Activated CD4-positive, alpha-beta memory T cell treated with anti-CD3 and anti-CD28 coated beads for 36 hours (primary cell): ENCODE measurements at regions of chr18 and their contacts with region 1.

Region 1: GRCh38 chr18:50287441-50288347 is at the start of gene CXXC1:
- DNase-seq: peak; percentile 98
- H3K4me3 Mint-ChIP-seq: peak within 1 kb of the TSS; percentile 88
- H3K27ac Mint-ChIP-seq: peak within 1 kb of the TSS; percentile 100
- H3K4me1 Mint-ChIP-seq: peaks cover 28% of the 10 kb centered on the region
- H3K27me3 Mint-ChIP-seq: no peaks in the 10 kb centered on the region
- total RNA-seq, gene CXXC1: 80.8 to 80.9 TPM

Region 2: DNA sequence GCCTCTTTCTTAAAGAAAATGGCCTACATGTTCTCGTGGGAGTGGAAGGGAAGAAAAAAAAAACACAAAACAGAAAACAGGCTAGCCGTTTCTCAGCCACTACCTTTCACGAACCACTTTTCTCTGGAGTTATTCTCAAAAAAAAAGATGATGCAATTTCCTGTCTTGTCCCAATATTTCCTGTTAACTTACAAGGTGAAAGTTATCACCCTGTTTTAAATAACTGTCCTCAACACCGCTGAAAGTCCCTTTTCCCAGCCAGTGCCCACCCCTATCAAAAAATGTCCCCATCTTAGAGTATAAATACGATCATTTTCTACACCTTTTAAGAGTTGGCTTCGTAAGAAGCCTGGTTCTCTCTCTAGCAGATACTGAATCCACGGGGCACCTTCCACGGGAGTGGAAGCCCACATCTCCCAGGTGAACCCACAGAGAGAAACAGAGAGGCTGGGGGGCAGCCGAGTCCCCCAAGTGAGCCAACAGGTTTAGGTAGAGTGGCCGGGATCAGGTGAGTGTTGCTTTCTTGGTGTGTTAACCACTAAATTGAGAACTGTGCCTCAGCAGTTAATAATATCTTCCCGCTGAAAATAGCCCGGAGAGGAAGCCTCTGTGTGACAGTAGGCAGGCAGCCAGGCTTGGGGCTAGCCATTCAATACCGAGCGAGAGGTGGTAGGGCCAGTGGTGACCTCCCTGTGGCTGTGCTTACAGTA is 1352.8 kb before region 1 on chr18:
- CTCF ChIA-PET with region 1: no interaction called
- POLR2A ChIA-PET with region 1: no interaction called
- intact Hi-C with region 1: loop called (anchors 10 kb)
- DNase-seq: no peak
- H3K4me3 Mint-ChIP-seq: peak overlapping the region; percentile 40
- H3K27ac Mint-ChIP-seq: peak overlapping the region; percentile 76
- H3K4me1 Mint-ChIP-seq: peaks cover 89% of the 10 kb centered on the region
- H3K27me3 Mint-ChIP-seq: no peaks in the 10 kb centered on the region

Region 3: DNA sequence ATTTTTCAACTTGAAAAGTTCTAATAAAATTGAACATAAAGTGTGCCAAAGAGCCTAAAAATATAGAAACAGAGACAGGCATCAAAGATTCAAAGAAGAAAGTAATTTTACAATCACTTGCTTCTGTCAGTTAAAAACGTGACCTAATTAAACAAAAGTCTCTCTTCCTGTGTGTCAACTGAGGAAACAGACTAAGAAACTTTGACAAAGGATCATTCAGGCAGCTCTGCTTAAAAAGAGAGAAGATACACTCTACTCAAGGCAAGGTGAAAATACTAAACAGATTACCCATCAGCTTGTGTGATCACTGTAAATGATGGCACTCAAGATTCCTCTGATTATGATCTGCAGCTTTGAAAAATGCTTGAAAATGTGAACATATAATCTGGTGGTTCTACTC is 875.0 kb before region 1 on chr18:
- CTCF ChIA-PET with region 1: no interaction called
- POLR2A ChIA-PET with region 1: no interaction called
- intact Hi-C with region 1: no loop called
- DNase-seq: no peak
- H3K4me3 Mint-ChIP-seq: no peak overlapping the region
- H3K27ac Mint-ChIP-seq: peak overlapping the region; percentile 77
- H3K4me1 Mint-ChIP-seq: peaks cover 29% of the 10 kb centered on the region
- H3K27me3 Mint-ChIP-seq: no peaks in the 10 kb centered on the region

Region 4: DNA sequence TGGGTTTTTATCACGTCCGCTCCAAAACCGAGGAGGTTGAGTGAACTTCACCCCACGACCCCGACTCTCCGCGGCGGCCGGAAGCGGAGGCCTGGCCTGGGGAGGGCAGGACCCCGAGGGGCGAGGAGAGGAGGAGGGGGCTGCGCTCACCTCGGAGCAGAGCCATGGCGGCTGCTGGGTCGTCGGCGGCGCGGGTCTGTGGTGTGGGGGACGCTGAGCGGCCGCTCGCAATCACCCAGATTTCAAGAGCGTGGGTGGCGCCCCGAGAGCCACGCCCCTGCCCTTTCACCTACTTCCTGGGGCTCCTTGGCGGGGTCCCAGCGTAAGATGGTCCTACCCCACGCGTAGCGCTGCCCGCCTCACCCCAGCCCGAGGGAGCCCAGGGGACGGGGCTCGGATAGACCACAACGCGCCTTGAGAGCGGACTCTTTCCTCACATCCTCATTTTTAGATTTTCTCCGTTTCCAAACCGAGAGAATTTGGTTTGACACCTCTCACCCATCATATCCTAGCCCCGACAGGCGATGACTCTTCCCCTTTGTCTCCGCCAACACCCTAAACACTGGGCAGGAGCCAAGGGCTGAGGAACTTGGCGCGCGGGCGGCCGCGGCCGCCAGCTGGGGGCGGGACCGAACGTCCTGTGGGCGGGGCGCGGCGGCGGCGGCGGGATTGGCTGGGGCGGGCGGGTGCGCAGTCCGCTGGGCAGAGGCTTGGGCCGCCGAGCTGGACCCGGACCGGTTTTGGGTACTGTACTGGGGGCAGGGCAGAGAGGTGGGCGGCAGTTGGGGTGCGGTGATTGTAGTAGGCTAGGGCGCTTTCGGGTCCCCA is 474.2 kb before region 1 on chr18 and contains the start of gene ACAA2:
- CTCF ChIA-PET with region 1: no interaction called
- POLR2A ChIA-PET with region 1: no interaction called
- intact Hi-C with region 1: loop called (anchors 5 kb)
- DNase-seq: peak; percentile 90
- H3K4me3 Mint-ChIP-seq: peak within 1 kb of the TSS; percentile 91
- H3K27ac Mint-ChIP-seq: peak within 1 kb of the TSS; percentile 95
- H3K4me1 Mint-ChIP-seq: peaks cover 45% of the 10 kb centered on the region
- H3K27me3 Mint-ChIP-seq: no peaks in the 10 kb centered on the region
- total RNA-seq, gene ACAA2: 77.9 to 78.4 TPM

Region 5: GRCh38 chr18:50013363-50014138 is 274.1 kb before region 1 on chr18:
- CTCF ChIA-PET with region 1: no interaction called
- POLR2A ChIA-PET with region 1: no interaction called
- intact Hi-C with region 1: no loop called
- DNase-seq: no peak
- H3K4me3 Mint-ChIP-seq: no peak overlapping the region
- H3K27ac Mint-ChIP-seq: no peak overlapping the region
- H3K4me1 Mint-ChIP-seq: no peaks in the 10 kb centered on the region
- H3K27me3 Mint-ChIP-seq: peaks cover 2% of the 10 kb centered on the region

Region 6: GRCh38 chr18:50091509-50092244 is 196.0 kb before region 1 on chr18:
- CTCF ChIA-PET with region 1: no interaction called
- POLR2A ChIA-PET with region 1: no interaction called
- intact Hi-C with region 1: no loop called
- DNase-seq: no peak
- H3K4me3 Mint-ChIP-seq: no peak overlapping the region
- H3K27ac Mint-ChIP-seq: no peak overlapping the region
- H3K4me1 Mint-ChIP-seq: no peaks in the 10 kb centered on the region
- H3K27me3 Mint-ChIP-seq: peaks cover 11% of the 10 kb centered on the region

Region 7: GRCh38 chr18:50297621-50298442 is 10.1 kb after region 1 on chr18:
- CTCF ChIA-PET with region 1: no interaction called
- POLR2A ChIA-PET with region 1: no interaction called
- intact Hi-C with region 1: loop called (anchors 1 kb)
- DNase-seq: peak; percentile 88
- H3K4me3 Mint-ChIP-seq: peak overlapping the region; percentile 72
- H3K27ac Mint-ChIP-seq: no peak overlapping the region
- H3K4me1 Mint-ChIP-seq: peaks cover 10% of the 10 kb centered on the region
- H3K27me3 Mint-ChIP-seq: peaks cover 19% of the 10 kb centered on the region

Region 8: DNA sequence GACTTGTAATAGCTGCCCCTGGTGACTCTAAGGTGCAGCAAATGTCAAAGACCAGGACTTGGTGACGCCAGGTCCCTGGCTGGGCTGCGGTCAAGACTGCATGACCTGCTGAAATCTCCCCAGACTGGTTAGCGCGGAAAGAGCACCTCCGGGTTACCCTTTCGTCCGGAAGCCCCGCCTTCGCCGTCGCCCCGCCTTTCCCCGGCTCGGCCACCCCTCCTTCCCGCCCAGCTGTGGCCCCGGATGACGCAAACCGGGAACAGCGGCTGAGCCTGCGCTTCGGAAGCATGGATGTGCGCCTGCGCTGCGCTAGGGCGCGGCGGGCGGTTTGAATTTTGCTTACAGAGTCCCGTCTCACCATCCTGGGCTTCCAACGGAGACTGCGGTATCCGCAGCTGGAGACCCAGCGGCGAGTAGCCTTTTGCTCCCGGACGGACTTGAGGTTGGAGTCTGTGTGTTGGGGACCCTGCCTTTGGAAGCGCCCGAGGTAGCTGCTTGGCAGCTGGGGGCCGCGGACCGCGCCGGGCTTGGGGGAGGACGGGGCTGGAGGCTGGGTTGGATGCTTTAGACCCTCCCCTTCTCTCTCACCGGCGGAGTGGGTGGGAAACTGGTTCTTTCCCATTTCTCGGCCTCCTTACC is 87.2 kb after region 1 on chr18 and contains the start of gene SKA1:
- CTCF ChIA-PET with region 1: no interaction called
- POLR2A ChIA-PET with region 1: no interaction called
- intact Hi-C with region 1: loop called (anchors 1 kb)
- DNase-seq: peak; percentile 95
- H3K4me3 Mint-ChIP-seq: peak within 1 kb of the TSS; percentile 87
- H3K27ac Mint-ChIP-seq: peak within 1 kb of the TSS; percentile 77
- H3K4me1 Mint-ChIP-seq: no peaks in the 10 kb centered on the region
- H3K27me3 Mint-ChIP-seq: peaks cover 5% of the 10 kb centered on the region
- total RNA-seq, gene SKA1: 44.2 to 46.0 TPM